ENCODE measurements at regions of chr1 and their contacts with region 1.

Region 1: DNA sequence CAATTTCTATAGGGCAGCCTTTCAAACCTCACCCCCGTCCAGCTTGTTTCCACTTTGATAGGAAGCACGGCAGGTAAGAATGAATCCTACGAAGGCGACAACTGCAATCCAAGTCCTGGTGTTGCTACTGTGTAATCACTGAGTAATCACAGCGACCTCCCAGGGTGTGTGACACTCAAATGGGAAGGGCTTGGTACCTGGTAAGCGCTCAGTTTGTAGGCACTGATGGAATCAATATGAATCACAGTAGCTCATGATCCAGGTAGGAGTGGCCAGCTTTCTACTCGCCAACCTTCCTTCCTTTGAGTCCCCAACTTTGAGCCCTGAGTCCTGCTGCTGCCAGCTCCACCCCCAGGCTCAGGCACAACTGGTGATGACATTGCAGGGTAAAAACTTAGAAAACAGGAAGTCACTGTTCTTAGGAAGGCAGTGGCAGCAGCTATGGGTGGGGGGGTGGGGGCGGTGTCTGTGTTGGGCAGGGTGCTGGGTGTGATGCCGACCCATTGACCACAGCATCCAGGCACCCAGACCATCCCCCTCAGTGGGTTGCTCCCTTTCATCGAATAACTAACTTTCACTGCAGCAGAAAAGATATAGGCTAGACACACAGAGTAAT is 70.7 kb downstream of the CD247 start:
- DNase-seq: peak; percentile 73 to 93 (median 76)
- H3K4me3 ChIP-seq: peak overlapping the region; percentile 7 to 34
- H3K4me3 Mint-ChIP-seq: peak overlapping the region; percentile 66 to 92 (median 82)
- H3K27ac ChIP-seq: peak overlapping the region; percentile 63
- H3K27ac Mint-ChIP-seq: peak overlapping the region; percentile 91 to 99 (median 96)
- H3K4me1 ChIP-seq: peaks cover 83% of the 10 kb centered on the region
- H3K4me1 Mint-ChIP-seq: peaks cover 59 to 93% (median 74%) of the 10 kb centered on the region in 4 donors
- H3K27me3 ChIP-seq: no peaks in the 10 kb centered on the region
- H3K27me3 Mint-ChIP-seq: no peaks in the 10 kb centered on the region

Region 2: GRCh38 chr1:167312871-167313270 is 134.8 kb before region 1 on chr1:
- CTCF ChIA-PET with region 1: no interaction called
- POLR2A ChIA-PET with region 1: no interaction called
- intact Hi-C with region 1: no loop called
- DNase-seq: no peak
- H3K4me3 ChIP-seq: no peak overlapping the region
- H3K4me3 Mint-ChIP-seq: no peak overlapping the region
- H3K27ac ChIP-seq: no peak overlapping the region
- H3K27ac Mint-ChIP-seq: peak overlapping the region in 1 of 7 donors; percentile 29
- H3K4me1 ChIP-seq: no peaks in the 10 kb centered on the region
- H3K4me1 Mint-ChIP-seq: peaks cover 0 to 6% (median 4%) of the 10 kb centered on the region in 4 donors
- H3K27me3 ChIP-seq: no peaks in the 10 kb centered on the region
- H3K27me3 Mint-ChIP-seq: no peaks in the 10 kb centered on the region

Region 3: GRCh38 chr1:167460836-167461235 is 13.2 kb after region 1 on chr1:
- CTCF ChIA-PET with region 1: interaction called, 12 read pairs
- POLR2A ChIA-PET with region 1: interaction called, 48 read pairs
- intact Hi-C with region 1: loop called (anchors 1 kb)
- DNase-seq: peak; percentile 48 to 76 (median 61)
- H3K4me3 ChIP-seq: no peak overlapping the region
- H3K4me3 Mint-ChIP-seq: peak overlapping the region in 4 of 8 donors; percentile 31 to 70 (median 42)
- H3K27ac ChIP-seq: peak overlapping the region; percentile 50
- H3K27ac Mint-ChIP-seq: peak overlapping the region; percentile 88 to 95 (median 93)
- H3K4me1 ChIP-seq: peaks cover 92% of the 10 kb centered on the region
- H3K4me1 Mint-ChIP-seq: peaks cover 59 to 90% (median 73%) of the 10 kb centered on the region in 4 donors
- H3K27me3 ChIP-seq: no peaks in the 10 kb centered on the region
- H3K27me3 Mint-ChIP-seq: no peaks in the 10 kb centered on the region

Region 4: GRCh38 chr1:167474191-167474716 is 26.6 kb after region 1 on chr1:
- CTCF ChIA-PET with region 1: interaction called, 4 read pairs
- POLR2A ChIA-PET with region 1: interaction called, 46 read pairs
- intact Hi-C with region 1: no loop called
- DNase-seq: peak; percentile 42 to 84 (median 51)
- H3K4me3 ChIP-seq: peak overlapping the region in 1 of 2 donors; percentile 32
- H3K4me3 Mint-ChIP-seq: peak overlapping the region; percentile 49 to 89 (median 80)
- H3K27ac ChIP-seq: peak overlapping the region; percentile 48
- H3K27ac Mint-ChIP-seq: peak overlapping the region; percentile 80 to 100 (median 92)
- H3K4me1 ChIP-seq: peaks cover 97% of the 10 kb centered on the region
- H3K4me1 Mint-ChIP-seq: peaks cover 62 to 99% (median 76%) of the 10 kb centered on the region in 4 donors
- H3K27me3 ChIP-seq: no peaks in the 10 kb centered on the region
- H3K27me3 Mint-ChIP-seq: no peaks in the 10 kb centered on the region

Region 5: DNA sequence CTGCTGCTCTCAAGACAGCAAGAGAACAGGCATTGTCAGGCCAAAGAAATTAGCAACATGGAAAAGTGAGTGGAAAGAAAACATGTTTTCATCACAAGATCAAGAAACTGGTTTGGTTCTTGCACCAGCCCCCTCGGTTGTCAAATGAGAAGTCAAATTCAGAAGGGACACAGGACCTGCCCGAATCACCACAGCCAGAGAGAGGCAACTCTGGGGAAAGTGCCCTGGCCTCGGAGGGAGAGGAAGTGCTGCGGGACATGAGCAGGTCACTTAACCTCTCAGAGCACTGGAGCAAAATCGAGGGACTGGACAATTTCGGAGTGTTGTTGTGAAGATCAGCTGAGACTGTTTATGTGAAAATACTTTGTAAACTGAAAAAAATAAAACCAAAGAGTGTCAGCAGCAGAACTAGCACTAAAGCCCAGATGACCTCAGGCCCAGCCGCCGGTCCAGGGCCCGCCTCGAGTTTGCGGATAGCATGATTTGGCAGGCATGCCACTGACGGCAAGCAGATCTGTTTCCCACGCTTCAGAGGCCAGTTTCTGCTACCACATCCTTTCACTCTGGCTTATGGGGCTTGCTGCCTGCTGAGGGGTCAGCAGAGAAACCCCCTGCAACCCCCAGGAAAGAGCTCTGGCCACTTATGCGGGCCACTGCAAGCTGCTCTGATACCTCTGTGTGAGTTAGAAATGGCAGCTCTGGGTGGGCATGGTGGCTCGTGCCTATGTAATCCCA is 38.6 kb after region 1 on chr1:
- CTCF ChIA-PET with region 1: interaction called, 24 read pairs
- POLR2A ChIA-PET with region 1: interaction called, 29 read pairs
- intact Hi-C with region 1: loop called (anchors 1 kb)
- DNase-seq: peak in 1 of 5 donors; percentile 46
- H3K4me3 ChIP-seq: no peak overlapping the region
- H3K4me3 Mint-ChIP-seq: peak overlapping the region; percentile 38 to 89 (median 75)
- H3K27ac ChIP-seq: peak overlapping the region; percentile 55
- H3K27ac Mint-ChIP-seq: peak overlapping the region; percentile 52 to 100 (median 94)
- H3K4me1 ChIP-seq: peaks cover 99% of the 10 kb centered on the region
- H3K4me1 Mint-ChIP-seq: peaks cover 76 to 100% (median 90%) of the 10 kb centered on the region in 4 donors
- H3K27me3 ChIP-seq: no peaks in the 10 kb centered on the region
- H3K27me3 Mint-ChIP-seq: no peaks in the 10 kb centered on the region

Region 6: DNA sequence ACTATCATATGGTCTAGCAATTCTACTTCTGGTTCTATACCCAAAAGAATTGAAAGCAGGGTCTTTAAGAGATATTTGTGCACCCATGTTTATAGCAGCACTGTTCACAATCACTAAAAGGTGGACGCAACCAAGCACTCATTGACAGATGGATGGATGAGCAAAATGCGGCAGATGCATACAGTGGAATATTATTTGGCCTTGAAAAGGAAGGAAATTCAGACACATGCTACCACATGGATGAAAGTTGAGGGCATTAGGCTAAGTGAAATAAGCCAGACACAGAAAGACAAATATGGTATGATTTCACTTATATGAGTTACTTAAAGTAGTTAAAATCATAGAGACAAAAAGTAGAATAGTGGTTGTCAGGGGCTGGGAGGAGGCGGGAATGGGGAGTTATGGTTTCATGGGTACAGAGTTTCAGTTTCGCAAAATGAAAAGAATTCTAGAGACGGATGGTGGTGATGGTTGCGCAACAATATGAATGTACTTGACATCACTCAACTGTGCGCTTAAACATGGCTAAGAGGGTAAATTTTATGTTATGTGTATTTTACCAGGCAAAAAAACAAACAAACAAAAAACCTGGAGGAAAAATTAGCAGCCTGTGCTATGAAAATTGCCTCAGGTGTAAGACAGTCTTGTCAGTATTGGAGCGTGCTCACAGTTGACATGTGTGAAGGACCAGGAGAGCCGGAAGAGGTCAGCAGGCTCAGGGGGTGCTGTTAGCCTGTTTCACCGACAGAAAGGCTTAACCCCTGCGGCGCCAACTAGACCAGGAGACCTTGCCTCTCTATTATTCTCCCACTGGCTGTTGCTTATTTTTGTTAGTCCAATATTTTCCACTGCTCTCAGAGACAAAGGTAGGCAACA is 44.2 kb after region 1 on chr1:
- CTCF ChIA-PET with region 1: interaction called, 7 read pairs
- POLR2A ChIA-PET with region 1: interaction called, 5 read pairs
- intact Hi-C with region 1: loop called (anchors 1 kb)
- DNase-seq: peak; percentile 36 to 64 (median 43)
- H3K4me3 ChIP-seq: peak overlapping the region; percentile 4 to 13
- H3K4me3 Mint-ChIP-seq: peak overlapping the region; percentile 67 to 85 (median 79)
- H3K27ac ChIP-seq: peak overlapping the region; percentile 64
- H3K27ac Mint-ChIP-seq: peak overlapping the region; percentile 87 to 100 (median 94)
- H3K4me1 ChIP-seq: peaks cover 99% of the 10 kb centered on the region
- H3K4me1 Mint-ChIP-seq: peaks cover 76 to 100% (median 88%) of the 10 kb centered on the region in 4 donors
- H3K27me3 ChIP-seq: no peaks in the 10 kb centered on the region
- H3K27me3 Mint-ChIP-seq: no peaks in the 10 kb centered on the region

Region 7: DNA sequence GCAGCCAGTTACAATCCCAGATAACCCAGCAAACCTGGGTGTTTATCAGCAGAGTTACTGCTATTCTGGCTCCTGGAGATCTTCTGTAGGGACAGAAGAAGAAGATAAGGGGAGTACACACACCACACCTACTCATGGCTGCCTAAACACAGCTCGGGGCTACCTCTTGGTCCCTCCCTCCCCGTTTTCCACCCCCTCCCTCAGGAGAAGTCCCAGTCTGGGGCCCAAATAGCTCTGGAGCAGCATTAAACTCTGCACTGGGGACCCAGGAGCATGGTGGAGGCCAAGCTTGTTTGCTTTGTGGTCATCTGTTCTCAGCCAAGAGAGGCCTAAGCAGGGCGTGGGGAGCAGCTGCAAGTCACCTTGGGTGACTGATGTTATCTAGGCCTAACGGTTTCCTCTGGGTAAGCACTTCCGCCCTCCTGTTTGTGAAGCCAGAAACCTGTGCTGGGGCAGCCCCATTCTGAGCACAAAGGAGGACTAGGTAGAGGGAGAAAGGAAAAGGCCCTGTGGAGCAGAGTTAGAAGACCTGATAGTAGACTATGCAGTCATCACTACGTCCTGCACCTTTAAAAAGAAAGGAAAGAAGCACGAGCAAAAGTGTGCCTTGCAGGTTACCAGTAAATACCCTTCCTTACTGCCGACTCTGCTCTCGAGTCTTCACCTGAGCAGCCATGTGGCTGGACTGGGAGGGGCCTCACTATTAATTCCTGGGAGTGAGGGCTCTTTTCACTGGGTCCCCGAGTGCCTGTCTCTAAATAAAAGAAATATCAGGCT is 180.4 kb after region 1 on chr1:
- CTCF ChIA-PET with region 1: no interaction called
- POLR2A ChIA-PET with region 1: interaction called, 3 read pairs
- intact Hi-C with region 1: loop called (anchors 5 kb)
- DNase-seq: peak; percentile 78 to 95 (median 81)
- H3K4me3 ChIP-seq: peak overlapping the region; percentile 74 to 82
- H3K4me3 Mint-ChIP-seq: peak overlapping the region; percentile 90 to 99 (median 94)
- H3K27ac ChIP-seq: peak overlapping the region; percentile 90
- H3K27ac Mint-ChIP-seq: peak overlapping the region; percentile 94 to 99 (median 96)
- H3K4me1 ChIP-seq: peaks cover 56% of the 10 kb centered on the region
- H3K4me1 Mint-ChIP-seq: peaks cover 46 to 81% (median 54%) of the 10 kb centered on the region in 4 donors
- H3K27me3 ChIP-seq: no peaks in the 10 kb centered on the region
- H3K27me3 Mint-ChIP-seq: no peaks in the 10 kb centered on the region